Activated CD8-positive, alpha-beta memory T cell treated with anti-CD3 and anti-CD28 coated beads, Interleukin-2, amount 10 ng/mL, durations not matched to agents 7 days and 5 days (primary cell): ENCODE measurements at regions of chr6 and their contacts with region 1.

Region 1: DNA sequence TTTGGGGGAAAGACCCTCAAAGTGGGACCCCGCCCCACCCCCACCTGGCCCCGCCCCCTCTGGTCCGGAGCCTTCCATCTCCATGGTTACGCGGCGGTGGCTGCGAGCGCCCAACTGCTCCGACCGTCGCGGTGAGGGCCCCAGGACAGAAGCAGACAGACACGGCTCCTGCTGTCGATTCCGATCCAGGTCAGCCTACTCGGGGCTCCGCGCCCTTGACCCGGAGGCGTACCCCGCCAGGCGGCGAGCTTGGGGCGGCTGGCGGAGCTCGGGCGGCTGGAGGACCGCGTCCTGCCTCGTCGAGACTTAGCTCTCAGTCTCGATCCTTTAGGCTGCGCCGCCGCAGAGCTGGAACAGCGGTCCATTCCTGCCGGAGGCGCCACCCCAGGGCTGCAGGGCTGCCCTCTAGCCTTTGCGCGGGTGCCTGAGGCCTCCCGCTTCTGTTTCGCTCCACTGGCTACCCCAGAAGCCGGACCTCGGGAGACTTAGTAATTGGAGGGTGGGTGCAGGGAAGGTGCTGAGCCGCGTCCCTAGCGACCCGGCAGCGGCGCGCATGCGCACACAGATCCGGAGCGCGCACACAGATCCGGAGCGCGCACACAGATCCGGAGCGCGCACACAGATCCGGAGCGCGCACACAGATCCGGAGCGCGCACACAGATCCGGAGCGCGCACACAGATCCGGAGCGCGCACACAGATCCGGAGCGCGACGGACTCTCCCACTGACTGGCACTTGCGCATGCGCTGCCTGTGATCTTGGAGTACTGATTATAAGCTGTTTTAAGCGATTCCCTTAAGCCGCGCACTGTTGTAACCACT is at the start of gene CFAP206:
- DNase-seq: peak; percentile 84
- ATAC-seq: peak; percentile 89
- H3K4me3 Mint-ChIP-seq: peak within 1 kb of the TSS; percentile 69
- H3K27ac Mint-ChIP-seq: peak within 1 kb of the TSS; percentile 69
- H3K4me1 Mint-ChIP-seq: peaks cover 11% of the 10 kb centered on the region
- H3K27me3 Mint-ChIP-seq: peaks cover 35% of the 10 kb centered on the region
- total RNA-seq, gene CFAP206: not detected

Region 2: GRCh38 chr6:87393022-87393622 is 15.0 kb before region 1 on chr6:
- CTCF ChIA-PET with region 1: interaction called, 11 read pairs
- DNase-seq: no peak
- ATAC-seq: peak; percentile 86
- H3K4me3 Mint-ChIP-seq: no peak overlapping the region
- H3K27ac Mint-ChIP-seq: no peak overlapping the region
- H3K4me1 Mint-ChIP-seq: peaks cover 2% of the 10 kb centered on the region
- H3K27me3 Mint-ChIP-seq: no peaks in the 10 kb centered on the region